ENCODE measurements at regions of chr11 and their contacts with region 1.

Region 1: GRCh38 chr11:130145975-130146776 is 13.4 kb upstream of the ST14 start:
- DNase-seq: no peak
- ATAC-seq: peak; percentile 67
- H3K4me3 ChIP-seq: no peak overlapping the region
- H3K27ac ChIP-seq: no peak overlapping the region
- H3K4me1 ChIP-seq: peaks cover 42% of the 10 kb centered on the region
- H3K27me3 ChIP-seq: no peaks in the 10 kb centered on the region
- CTCF ChIP-seq: peak in 1 of 3 experiments; percentile 17; a peak in 1 of 6 replicates
- EP300 ChIP-seq: no peak
- POLR2A ChIP-seq: no peak
- RAD21 ChIP-seq: no peak

Region 2: GRCh38 chr11:129905402-129905801 is 240.8 kb before region 1 on chr11:
- CTCF ChIA-PET with region 1: no interaction called
- POLR2A ChIA-PET with region 1: no interaction called
- RAD21 ChIA-PET with region 1: no interaction called
- SMC1A ChIA-PET with region 1: no interaction called
- in situ Hi-C with region 1: no loop called
- intact Hi-C with region 1: no loop called
- DNase-seq: no peak
- ATAC-seq: no peak
- H3K4me3 ChIP-seq: no peak overlapping the region
- H3K27ac ChIP-seq: no peak overlapping the region
- H3K4me1 ChIP-seq: no peaks in the 10 kb centered on the region
- H3K27me3 ChIP-seq: no peaks in the 10 kb centered on the region
- CTCF ChIP-seq: no peak
- EP300 ChIP-seq: no peak
- POLR2A ChIP-seq: no peak
- RAD21 ChIP-seq: no peak

Region 3: DNA sequence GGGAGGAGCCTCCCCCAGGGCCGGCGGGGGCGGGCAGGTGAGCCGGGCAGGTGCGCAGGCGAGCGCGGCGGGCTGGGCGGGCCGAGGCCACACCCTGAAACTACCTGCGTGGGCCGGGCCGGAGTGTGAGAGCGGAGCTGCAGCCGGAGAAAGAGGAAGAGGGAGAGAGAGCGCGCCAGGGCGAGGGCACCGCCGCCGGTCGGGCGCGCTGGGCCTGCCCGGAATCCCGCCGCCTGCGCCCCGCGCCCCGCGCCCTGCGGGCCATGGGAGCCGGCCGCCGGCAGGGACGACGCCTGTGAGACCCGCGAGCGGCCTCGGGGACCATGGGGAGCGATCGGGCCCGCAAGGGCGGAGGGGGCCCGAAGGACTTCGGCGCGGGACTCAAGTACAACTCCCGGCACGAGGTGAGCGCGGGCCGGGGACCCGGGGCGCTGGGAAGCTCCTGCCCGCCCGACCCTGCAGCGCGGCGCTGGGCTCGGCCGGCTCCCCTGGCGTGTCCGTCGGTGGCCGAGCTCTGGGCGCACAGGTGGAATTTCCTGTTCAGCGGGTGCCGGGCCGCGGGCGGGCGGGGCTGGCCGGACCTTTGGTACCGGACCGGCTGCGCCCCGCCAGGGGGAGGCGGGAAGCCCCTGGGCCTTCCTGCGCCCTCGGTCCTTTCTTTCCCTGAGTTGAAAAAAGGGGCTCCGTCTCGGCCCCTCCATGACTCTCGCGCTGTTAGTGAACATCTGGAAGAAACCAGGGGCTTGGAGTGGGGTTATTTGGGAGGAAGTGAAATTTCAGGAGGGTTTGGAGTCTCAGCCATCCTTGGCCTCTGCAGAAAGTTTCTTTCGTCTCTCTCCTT is 13.7 kb after region 1 on chr11 and contains the start of gene ST14:
- CTCF ChIA-PET with region 1: interaction called, 10 read pairs
- POLR2A ChIA-PET with region 1: interaction called, 4 read pairs
- RAD21 ChIA-PET with region 1: interaction called, 22 read pairs
- SMC1A ChIA-PET with region 1: interaction called, 14 read pairs
- in situ Hi-C with region 1: no loop called
- intact Hi-C with region 1: no loop called
- DNase-seq: no peak
- ATAC-seq: peak; percentile 64
- H3K4me3 ChIP-seq: peak within 1 kb of the TSS; percentile 57; the same call in 1 of the 2 replicates
- H3K27ac ChIP-seq: no peak within 1 kb of the TSS
- H3K4me1 ChIP-seq: 0 out of 2 replicates have a peak, but pooled peaks cover 6% of the 10 kb centered on the region
- H3K27me3 ChIP-seq: peaks cover 16 to 17% of the 10 kb centered on the region in 2 experiments
- CTCF ChIP-seq: no peak
- EP300 ChIP-seq: no peak
- POLR2A ChIP-seq: no peak
- RAD21 ChIP-seq: no peak
- polyA plus RNA-seq, gene ST14: 0.02 TPM in 1 of 2 experiments, not detected in the other

Region 4: DNA sequence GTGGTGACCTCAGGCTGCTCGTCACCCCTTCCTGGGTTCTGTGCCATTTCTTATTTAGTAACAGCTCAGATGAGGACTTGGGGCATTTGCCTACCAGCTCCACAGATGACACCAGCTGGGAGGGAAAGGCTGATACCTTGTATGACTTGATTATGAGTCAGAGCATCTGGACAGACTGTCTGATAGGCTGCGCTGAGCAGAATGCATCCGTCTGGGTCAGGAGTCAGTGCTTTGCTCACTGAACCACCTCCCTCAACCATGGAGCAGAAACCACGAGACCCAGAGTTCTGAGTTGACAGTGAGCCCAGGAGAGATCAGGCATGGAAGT is 20.2 kb after region 1 on chr11:
- CTCF ChIA-PET with region 1: interaction called, 10 read pairs
- POLR2A ChIA-PET with region 1: no interaction called
- RAD21 ChIA-PET with region 1: interaction called, 22 read pairs
- SMC1A ChIA-PET with region 1: interaction called, 14 read pairs
- in situ Hi-C with region 1: no loop called
- intact Hi-C with region 1: no loop called
- DNase-seq: no peak
- ATAC-seq: peak; percentile 89
- H3K4me3 ChIP-seq: no peak overlapping the region
- H3K27ac ChIP-seq: no peak overlapping the region
- H3K4me1 ChIP-seq: no peaks in the 10 kb centered on the region
- H3K27me3 ChIP-seq: peaks cover 2 to 3% of the 10 kb centered on the region in 2 experiments; a peak in 2 of 4 replicates
- CTCF ChIP-seq: no peak
- EP300 ChIP-seq: no peak
- POLR2A ChIP-seq: no peak
- RAD21 ChIP-seq: no peak

Region 5: DNA sequence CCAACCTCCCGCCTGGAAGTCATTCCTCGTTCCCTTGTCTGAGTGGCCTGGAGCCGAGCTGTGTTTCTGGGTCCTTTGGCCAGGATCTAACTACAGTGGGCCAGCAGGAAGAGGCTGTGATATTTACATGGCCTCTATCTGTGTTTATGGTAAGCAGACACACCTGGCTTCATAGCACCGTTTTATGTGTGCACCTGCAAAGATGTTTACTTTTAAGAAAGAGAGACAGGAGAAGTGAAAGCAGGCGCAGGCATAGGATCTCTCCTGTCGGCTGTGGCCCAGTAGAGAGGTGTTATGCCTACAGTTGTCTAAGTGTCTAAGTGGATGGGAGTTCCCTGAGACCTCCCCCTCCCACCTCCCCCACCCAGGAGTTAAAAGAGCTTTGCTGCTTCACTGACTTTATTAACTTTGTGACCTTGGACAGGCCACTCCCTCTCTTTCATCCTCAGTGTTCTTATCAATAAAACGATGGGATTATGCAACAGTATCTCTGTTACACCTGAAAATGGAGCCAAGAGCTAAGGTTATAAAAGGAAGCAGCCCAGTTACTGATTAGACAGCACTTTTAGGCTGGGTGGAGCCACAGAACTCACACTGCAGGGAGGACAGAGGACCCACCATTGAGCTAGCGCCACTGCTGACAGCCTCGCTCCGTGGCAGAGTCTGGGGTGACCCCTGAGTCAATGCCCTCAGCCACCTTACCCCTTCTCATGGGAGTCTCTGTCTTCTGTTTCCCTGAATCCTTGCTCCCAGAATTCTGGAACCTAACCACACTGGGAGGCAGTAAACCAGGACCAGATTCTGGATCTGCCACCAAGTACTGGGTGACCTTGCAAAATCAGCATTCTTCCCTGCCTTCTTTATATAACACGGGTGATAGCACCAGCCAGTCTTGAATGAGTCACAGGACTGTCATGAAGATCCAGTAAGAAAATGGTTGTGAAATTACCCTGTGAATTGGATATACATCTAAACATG is 35.4 kb after region 1 on chr11:
- CTCF ChIA-PET with region 1: interaction called, 6 read pairs
- POLR2A ChIA-PET with region 1: interaction called, 9 read pairs
- RAD21 ChIA-PET with region 1: interaction called, 17 read pairs
- SMC1A ChIA-PET with region 1: interaction called, 37 read pairs
- in situ Hi-C with region 1: no loop called
- intact Hi-C with region 1: loop called (anchors 5 kb)
- DNase-seq: no peak
- ATAC-seq: peak; percentile 74
- H3K4me3 ChIP-seq: no peak overlapping the region
- H3K27ac ChIP-seq: no peak overlapping the region
- H3K4me1 ChIP-seq: peaks cover 35% of the 10 kb centered on the region
- H3K27me3 ChIP-seq: no peaks in the 10 kb centered on the region
- CTCF ChIP-seq: no peak
- EP300 ChIP-seq: peak in 1 of 2 experiments; percentile 41; a peak in 1 of 4 replicates
- POLR2A ChIP-seq: no peak
- RAD21 ChIP-seq: no peak

Region 6: GRCh38 chr11:130213143-130213978 is 67.2 kb after region 1 on chr11:
- CTCF ChIA-PET with region 1: interaction called, 10 read pairs
- POLR2A ChIA-PET with region 1: no interaction called
- RAD21 ChIA-PET with region 1: interaction called, 5 read pairs
- SMC1A ChIA-PET with region 1: interaction called, 5 read pairs
- in situ Hi-C with region 1: no loop called
- intact Hi-C with region 1: no loop called
- DNase-seq: no peak
- ATAC-seq: peak; percentile 95
- H3K4me3 ChIP-seq: no peak overlapping the region
- H3K27ac ChIP-seq: no peak overlapping the region
- H3K4me1 ChIP-seq: no peaks in the 10 kb centered on the region
- H3K27me3 ChIP-seq: no peaks in the 10 kb centered on the region
- CTCF ChIP-seq: peak; percentile 92 to 94 (median 94); a peak in 5 of 6 replicates
- EP300 ChIP-seq: no peak
- POLR2A ChIP-seq: no peak
- RAD21 ChIP-seq: peak; percentile 97